PC-3 (cell line): ENCODE measurements at regions of chr1 and their contacts with region 1.

Region 1: GRCh38 chr1:111399792-111400610 is 27.5 kb downstream of the OVGP1 start:
- DNase-seq: peak; percentile 78
- ATAC-seq: peak; percentile 40
- H3K4me3 ChIP-seq: no peak overlapping the region
- H3K27ac ChIP-seq: no peak overlapping the region
- H3K4me1 ChIP-seq: 0 out of 2 replicates have a peak, but pooled peaks cover 4% of the 10 kb centered on the region
- H3K27me3 ChIP-seq: peaks cover 2% of the 10 kb centered on the region; the same call in 1 of the 2 replicates
- CTCF ChIP-seq: peak; percentile 70

Region 2: DNA sequence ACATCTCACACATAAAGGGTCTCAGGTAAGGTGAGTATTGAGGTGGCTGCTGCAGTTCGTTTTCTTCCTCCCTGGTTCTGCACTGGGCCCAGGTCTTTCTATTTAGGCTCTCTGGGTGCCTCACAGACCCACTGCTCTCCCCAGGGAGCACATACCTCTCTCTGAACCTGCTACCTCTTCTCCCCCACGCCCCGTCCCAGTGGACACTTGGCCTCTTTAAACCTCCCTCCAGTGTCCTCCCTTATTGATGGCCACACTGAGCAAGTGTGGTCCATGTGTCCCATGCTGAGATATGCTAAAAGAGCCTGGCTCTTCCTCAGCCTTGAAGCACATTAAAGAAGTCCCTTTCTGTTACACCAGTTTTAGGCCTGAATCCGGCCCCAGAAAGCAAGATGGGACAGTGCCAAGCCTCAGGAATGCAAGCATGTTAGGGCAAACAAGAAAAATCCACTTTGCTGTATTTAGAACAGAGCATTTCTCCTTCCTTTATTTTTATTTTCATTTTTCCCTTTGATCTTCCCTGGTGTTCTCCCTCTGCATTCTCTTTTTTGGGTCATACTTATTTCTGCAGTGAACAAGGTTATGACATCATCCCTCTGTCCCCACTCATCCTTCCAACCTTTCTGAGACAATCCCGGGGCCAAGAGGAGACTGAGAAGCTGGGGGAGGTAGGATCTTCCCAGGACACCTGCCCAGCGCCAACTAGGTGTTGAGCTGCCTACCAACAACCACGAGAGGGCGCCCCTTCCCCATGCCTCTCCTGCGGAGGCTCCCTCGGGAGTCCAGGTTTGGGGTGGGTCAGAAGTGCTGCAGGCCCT is 177.5 kb before region 1 on chr1:
- CTCF ChIA-PET with region 1: interaction called, 4 read pairs
- POLR2A ChIA-PET with region 1: interaction called, 5 read pairs
- intact Hi-C with region 1: loop called (anchors 1 kb)
- DNase-seq: peak; percentile 90
- ATAC-seq: peak; percentile 96
- H3K4me3 ChIP-seq: no peak overlapping the region
- H3K27ac ChIP-seq: no peak overlapping the region
- H3K4me1 ChIP-seq: peaks cover 25% of the 10 kb centered on the region
- H3K27me3 ChIP-seq: no peaks in the 10 kb centered on the region
- CTCF ChIP-seq: peak; percentile 95

Region 3: GRCh38 chr1:111346089-111346885 is 53.7 kb before region 1 on chr1:
- CTCF ChIA-PET with region 1: interaction called, 3 read pairs
- POLR2A ChIA-PET with region 1: no interaction called
- intact Hi-C with region 1: loop called (anchors 5 kb)
- DNase-seq: peak; percentile 72
- ATAC-seq: peak; percentile 89
- H3K4me3 ChIP-seq: peak overlapping the region; percentile 74
- H3K27ac ChIP-seq: no peak overlapping the region
- H3K4me1 ChIP-seq: peaks cover 5% of the 10 kb centered on the region; the same call in 1 of the 2 replicates
- H3K27me3 ChIP-seq: no peaks in the 10 kb centered on the region
- CTCF ChIP-seq: peak; percentile 30; the same call in 1 of the 2 replicates

Region 4: DNA sequence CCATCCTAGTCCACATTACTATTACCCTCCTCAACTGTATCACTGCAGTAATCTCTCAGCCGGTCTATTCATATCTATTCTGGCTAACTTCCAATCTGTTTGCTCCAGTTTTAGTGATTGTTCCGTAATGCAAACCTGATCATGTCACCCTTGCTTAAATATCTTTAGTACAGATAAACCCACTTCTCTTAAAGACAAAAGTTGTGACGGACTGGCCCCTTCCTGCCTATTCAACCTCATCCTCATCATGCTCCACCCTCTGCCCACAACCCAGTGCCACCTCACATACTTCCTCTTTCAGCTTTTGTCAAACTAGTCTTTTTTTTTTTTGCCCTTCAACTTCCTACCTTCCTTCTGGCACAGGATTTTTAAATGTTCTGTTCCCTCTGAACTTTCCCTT is 71.0 kb after region 1 on chr1:
- CTCF ChIA-PET with region 1: no interaction called
- POLR2A ChIA-PET with region 1: no interaction called
- intact Hi-C with region 1: no loop called
- DNase-seq: no peak
- ATAC-seq: no peak
- H3K4me3 ChIP-seq: no peak overlapping the region
- H3K27ac ChIP-seq: no peak overlapping the region
- H3K4me1 ChIP-seq: no peaks in the 10 kb centered on the region
- H3K27me3 ChIP-seq: no peaks in the 10 kb centered on the region
- CTCF ChIP-seq: no peak

Region 5: DNA sequence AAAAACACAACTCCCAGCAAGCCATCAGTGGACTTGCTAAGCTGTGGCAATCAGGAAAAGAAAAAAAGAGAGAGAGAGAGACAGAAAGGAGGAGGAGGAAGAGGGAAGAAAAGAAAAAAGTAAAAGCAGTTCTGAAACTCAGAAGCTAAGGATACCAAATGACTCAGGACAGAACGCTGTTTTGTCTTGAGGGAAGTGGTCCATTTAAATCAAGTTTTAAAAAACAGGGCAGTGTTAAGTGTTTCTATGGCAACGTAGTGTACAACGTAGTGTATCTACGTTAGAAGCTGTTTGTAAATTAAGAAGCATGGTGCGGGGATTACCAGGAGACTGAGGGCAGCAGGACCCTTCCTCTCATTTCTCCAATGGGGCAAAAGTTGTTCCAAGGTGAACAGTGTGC is 97.6 kb after region 1 on chr1:
- CTCF ChIA-PET with region 1: no interaction called
- POLR2A ChIA-PET with region 1: no interaction called
- intact Hi-C with region 1: no loop called
- DNase-seq: no peak
- ATAC-seq: no peak
- H3K4me3 ChIP-seq: no peak overlapping the region
- H3K27ac ChIP-seq: no peak overlapping the region
- H3K4me1 ChIP-seq: no peaks in the 10 kb centered on the region
- H3K27me3 ChIP-seq: peaks cover 14% of the 10 kb centered on the region
- CTCF ChIP-seq: no peak

Region 6: DNA sequence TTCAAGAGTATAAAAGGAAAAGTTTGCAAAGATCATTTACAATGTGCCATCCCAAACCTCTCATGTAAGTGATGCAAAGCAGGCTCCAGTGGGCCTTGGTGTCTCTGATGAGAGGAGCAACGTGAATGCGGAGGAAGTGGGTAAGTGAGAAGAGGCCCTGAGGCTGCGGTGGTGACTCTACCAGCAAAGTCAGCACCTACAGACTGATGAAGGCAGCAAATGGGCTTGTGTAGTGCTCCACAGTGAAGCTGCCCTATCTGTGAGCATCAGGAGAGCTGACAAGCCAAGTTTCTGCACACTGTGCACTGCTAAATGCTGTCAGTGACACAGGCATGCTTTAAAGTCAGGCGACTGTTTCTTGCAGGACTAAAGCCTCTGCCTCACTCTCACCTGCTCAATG is 204.0 kb after region 1 on chr1:
- CTCF ChIA-PET with region 1: no interaction called
- POLR2A ChIA-PET with region 1: no interaction called
- intact Hi-C with region 1: no loop called
- DNase-seq: no peak
- ATAC-seq: no peak
- H3K4me3 ChIP-seq: no peak overlapping the region
- H3K27ac ChIP-seq: no peak overlapping the region
- H3K4me1 ChIP-seq: peaks cover 15% of the 10 kb centered on the region
- H3K27me3 ChIP-seq: no peaks in the 10 kb centered on the region
- CTCF ChIP-seq: no peak

Region 7: DNA sequence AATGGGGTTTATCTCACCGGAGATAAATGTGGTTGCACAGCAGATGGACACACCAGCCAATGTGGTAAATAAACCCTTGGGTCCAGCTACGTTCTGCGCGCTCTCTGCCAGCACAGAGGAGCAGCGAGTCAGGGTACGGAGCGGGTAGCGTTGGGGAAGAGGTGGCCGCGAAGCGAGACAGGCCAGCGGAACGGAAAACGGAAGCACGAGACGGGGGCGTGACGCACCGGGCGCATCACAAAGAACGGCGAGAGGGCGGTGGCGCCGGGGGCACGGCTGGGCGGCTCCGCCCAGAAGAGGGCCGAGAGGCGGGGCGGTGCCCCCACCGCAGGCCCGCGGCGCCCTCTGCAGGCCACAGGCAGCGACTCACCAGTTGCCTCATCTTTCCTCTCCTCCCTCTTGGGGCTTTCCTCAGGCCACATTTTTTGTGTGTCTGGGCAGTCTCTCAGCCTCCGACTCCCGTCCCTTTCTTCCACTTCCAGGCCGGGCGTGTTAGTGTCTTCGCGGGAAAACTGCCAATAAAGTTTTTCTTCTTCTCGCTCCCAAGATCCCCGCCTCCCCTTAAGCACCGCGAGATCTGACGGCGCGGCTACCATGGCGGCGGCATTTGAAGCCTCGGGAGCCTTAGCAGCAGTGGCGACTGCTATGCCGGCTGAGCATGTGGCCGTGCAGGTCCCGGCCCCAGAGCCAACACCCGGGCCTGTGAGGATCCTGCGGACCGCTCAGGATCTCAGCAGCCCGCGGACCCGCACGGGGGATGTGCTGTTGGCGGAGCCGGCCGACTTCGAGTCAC is 355.5 kb after region 1 on chr1 and contains the start of gene DDX20:
- CTCF ChIA-PET with region 1: no interaction called
- POLR2A ChIA-PET with region 1: no interaction called
- intact Hi-C with region 1: no loop called
- DNase-seq: peak; percentile 95
- ATAC-seq: peak; percentile 86
- H3K4me3 ChIP-seq: peak within 1 kb of the TSS; percentile 82
- H3K27ac ChIP-seq: peak within 1 kb of the TSS; percentile 73
- H3K4me1 ChIP-seq: peaks cover 18% of the 10 kb centered on the region
- H3K27me3 ChIP-seq: no peaks in the 10 kb centered on the region
- CTCF ChIP-seq: peak; percentile 89
- total RNA-seq, gene DDX20: 21.6 and 22.2 TPM in 2 replicates